ENCODE measurements at regions of chr12 and their contacts with region 1.

Region 1: DNA sequence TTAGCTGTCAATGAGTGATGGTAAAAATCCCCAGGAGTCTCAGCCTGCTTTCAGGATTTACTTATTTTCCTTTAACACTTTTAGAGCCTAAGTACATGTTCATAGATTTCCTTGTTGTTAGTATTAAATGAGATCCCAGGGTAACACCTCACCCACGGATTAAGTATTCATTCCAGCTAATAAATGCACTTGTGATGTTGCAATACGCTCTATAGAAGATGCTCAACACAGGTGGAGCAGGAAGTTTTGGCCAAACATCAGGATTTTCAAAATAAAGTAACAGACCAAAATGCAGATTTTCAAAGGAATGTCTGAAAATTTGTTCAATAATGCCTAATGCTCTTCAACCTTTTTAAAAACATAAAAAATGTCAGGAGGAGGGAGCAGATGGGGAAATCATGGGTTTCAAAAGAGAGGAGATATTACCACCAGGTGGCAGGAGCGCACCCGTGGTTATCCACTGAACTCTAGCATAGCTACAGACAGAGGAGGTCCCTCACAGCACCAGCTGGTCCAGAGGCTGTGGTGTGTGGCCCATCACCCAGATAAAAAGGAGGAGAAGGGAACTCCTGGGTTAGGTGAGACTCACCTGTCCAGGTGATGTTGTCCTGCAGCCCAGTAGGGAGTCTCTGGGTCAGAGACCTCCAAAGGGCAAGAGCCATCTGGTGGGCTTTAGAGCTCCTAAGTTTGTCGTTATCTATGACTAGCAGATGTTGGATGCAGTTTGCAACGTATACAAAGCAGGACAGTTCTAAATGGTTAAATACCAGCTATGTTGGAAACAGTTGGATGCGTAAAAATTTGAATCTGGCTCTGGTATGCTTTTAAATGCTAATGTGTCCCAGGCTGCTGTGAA is 1158.4 kb upstream of the TMEM132C start:
- DNase-seq: peak; percentile 60 to 68 (median 64)
- ATAC-seq: peak; percentile 93 to 98 (median 96)
- H3K4me3 ChIP-seq: no peak overlapping the region
- H3K27ac ChIP-seq: no peak overlapping the region
- H3K4me1 ChIP-seq: no peaks in the 10 kb centered on the region
- H3K27me3 ChIP-seq: no peaks in the 10 kb centered on the region
- CTCF ChIP-seq: peak; percentile 75 to 76 (median 76)
- POLR2A ChIP-seq: no peak

Region 2: GRCh38 chr12:126601184-126602170 is 507.1 kb before region 1 on chr12:
- intact Hi-C with region 1: no loop called
- DNase-seq: no peak
- ATAC-seq: peak; percentile 94 to 97 (median 96)
- H3K4me3 ChIP-seq: peak overlapping the region in 1 of 3 donors; percentile 10
- H3K27ac ChIP-seq: peak overlapping the region; percentile 19 to 29 (median 27)
- H3K4me1 ChIP-seq: peaks cover 0 to 14% (median 4%) of the 10 kb centered on the region in 4 donors
- H3K27me3 ChIP-seq: no peaks in the 10 kb centered on the region
- CTCF ChIP-seq: no peak
- POLR2A ChIP-seq: no peak

Region 3: GRCh38 chr12:127293507-127294310 is 185.1 kb after region 1 on chr12:
- intact Hi-C with region 1: loop called in 1 of 2 experiments (anchors 10 kb)
- DNase-seq: peak; percentile 71 to 76 (median 74)
- ATAC-seq: peak; percentile 96 to 100 (median 98)
- H3K4me3 ChIP-seq: no peak overlapping the region
- H3K27ac ChIP-seq: no peak overlapping the region
- H3K4me1 ChIP-seq: no peaks in the 10 kb centered on the region
- H3K27me3 ChIP-seq: no peaks in the 10 kb centered on the region
- CTCF ChIP-seq: peak; percentile 85 to 88 (median 87)
- POLR2A ChIP-seq: no peak

Region 4: GRCh38 chr12:127809275-127809674 is 700.7 kb after region 1 on chr12:
- intact Hi-C with region 1: no loop called
- DNase-seq: no peak
- ATAC-seq: peak in 2 of 4 donors; percentile 67 to 75
- H3K4me3 ChIP-seq: no peak overlapping the region
- H3K27ac ChIP-seq: no peak overlapping the region
- H3K4me1 ChIP-seq: no peaks in the 10 kb centered on the region
- H3K27me3 ChIP-seq: no peaks in the 10 kb centered on the region
- CTCF ChIP-seq: no peak
- POLR2A ChIP-seq: no peak